ENCODE measurements at regions of chr3 and their contacts with region 1.

Region 1: DNA sequence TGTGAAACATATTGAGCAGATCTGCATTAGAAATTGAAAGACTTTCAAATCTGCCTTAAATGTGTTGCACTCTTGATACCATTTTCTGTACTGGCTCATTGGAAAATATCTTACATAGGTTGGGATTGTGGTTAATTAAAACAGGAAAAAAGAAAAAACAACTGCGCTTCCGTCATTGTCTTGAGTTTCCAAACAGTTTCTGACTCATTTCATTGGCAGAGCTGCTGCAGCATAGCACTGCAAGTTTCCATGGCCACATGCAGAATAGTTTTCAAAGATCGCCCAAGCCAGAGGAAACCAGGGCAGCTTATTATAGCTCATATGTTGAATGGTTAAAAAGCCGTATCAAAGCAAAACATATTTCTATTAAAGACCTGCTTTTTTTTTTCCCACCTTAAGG is 446.6 kb upstream of the BCHE start:
- DNase-seq: peak; percentile 85
- H3K4me3 Mint-ChIP-seq: peak overlapping the region; percentile 59
- H3K27ac Mint-ChIP-seq: peak overlapping the region; percentile 84
- H3K4me1 Mint-ChIP-seq: peaks cover 17% of the 10 kb centered on the region
- H3K27me3 Mint-ChIP-seq: no peaks in the 10 kb centered on the region
- CTCF ChIP-seq: no peak

Region 2: DNA sequence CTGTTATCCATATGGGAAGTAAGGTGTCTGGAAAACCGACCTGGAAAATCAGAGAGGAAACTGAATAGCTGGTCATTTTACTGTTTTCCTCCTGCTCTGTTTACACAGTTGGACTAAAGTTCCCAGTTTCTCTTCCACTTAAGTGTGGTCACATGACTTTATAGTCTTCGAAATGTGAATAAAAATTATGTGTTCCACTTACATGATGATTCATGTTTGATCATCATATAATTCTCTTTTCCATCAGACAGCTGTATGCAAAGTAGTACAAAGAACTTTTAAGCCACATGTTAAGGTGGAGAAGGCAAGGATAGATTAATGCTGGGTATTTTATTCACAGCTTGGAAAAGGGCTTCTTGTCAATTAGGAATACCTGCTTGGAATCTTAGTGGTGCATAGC is 78.8 kb after region 1 on chr3:
- CTCF ChIA-PET with region 1: no interaction called
- POLR2A ChIA-PET with region 1: no interaction called
- intact Hi-C with region 1: no loop called
- DNase-seq: peak; percentile 5
- H3K4me3 Mint-ChIP-seq: no peak overlapping the region
- H3K27ac Mint-ChIP-seq: peak overlapping the region; percentile 39
- H3K4me1 Mint-ChIP-seq: no peaks in the 10 kb centered on the region
- H3K27me3 Mint-ChIP-seq: no peaks in the 10 kb centered on the region
- CTCF ChIP-seq: no peak

Region 3: DNA sequence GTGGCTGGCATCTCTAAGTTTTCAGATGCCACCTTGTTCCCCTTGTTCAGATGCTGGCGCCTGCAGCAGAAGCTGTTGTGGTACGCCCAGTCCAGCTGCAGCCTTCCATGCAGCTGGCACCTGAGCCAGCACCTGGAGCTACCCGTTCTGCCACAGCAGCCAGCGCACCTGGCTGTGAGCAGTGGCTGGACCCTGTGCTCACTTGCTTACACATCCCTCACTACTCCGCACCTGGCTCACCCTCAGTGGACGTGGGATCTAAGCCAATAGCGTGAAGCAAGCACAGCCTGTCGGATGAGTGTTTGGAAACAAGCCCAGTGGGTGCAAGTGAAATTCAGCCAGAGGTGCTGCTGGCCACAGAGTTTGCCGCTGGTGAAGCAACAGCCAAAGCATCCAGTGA is 160.9 kb after region 1 on chr3:
- CTCF ChIA-PET with region 1: no interaction called
- POLR2A ChIA-PET with region 1: interaction called, 12 read pairs
- intact Hi-C with region 1: no loop called
- DNase-seq: peak; percentile 98
- H3K4me3 Mint-ChIP-seq: no peak overlapping the region
- H3K27ac Mint-ChIP-seq: no peak overlapping the region
- H3K4me1 Mint-ChIP-seq: peaks cover 21% of the 10 kb centered on the region
- H3K27me3 Mint-ChIP-seq: no peaks in the 10 kb centered on the region
- CTCF ChIP-seq: no peak

Measured in MCF 10A (cell line).